IMR-90 (cell line): ENCODE measurements at regions of chr10 and their contacts with region 1.

Region 1: GRCh38 chr10:77911535-77912123 is 14.9 kb downstream of the DLG5 start:
- DNase-seq: peak; percentile 47
- ATAC-seq: peak; percentile 43; the same call in 1 of the 2 replicates
- H3K4me3 ChIP-seq: no peak overlapping the region
- H3K27ac ChIP-seq: no peak overlapping the region
- H3K4me1 ChIP-seq: peaks cover 27% of the 10 kb centered on the region
- H3K27me3 ChIP-seq: no peaks in the 10 kb centered on the region
- CTCF ChIP-seq: no peak; the same call in 1 of the 2 replicates
- POLR2A ChIP-seq: no peak
- RAD21 ChIP-seq: no peak

Region 2: DNA sequence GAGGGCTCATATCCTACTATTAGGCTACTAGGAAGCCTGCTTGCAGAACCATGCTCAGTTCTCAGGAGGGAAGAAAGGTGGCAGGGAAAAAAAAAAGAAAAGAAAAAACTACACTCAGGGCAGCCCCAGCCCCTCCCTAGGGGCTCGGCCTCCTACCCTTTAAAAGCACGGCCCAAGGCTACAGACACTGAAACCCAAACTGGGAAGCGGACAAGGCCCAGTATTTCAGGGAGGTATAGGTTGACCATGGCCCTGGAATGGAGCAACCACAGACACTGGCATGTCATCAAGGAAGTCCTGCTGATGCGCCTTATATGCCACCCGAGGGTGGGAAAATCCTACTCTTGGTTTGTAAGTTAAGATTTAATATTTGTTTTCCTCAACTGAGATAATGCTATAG is 35.9 kb before region 1 on chr10:
- CTCF ChIA-PET with region 1: no interaction called
- POLR2A ChIA-PET with region 1: interaction called, 10 read pairs
- dilution Hi-C with region 1: no loop called
- in situ Hi-C with region 1: no loop called
- intact Hi-C with region 1: no loop called
- DNase-seq: no peak
- ATAC-seq: no peak
- H3K4me3 ChIP-seq: no peak overlapping the region
- H3K27ac ChIP-seq: no peak overlapping the region
- H3K4me1 ChIP-seq: peaks cover 25% of the 10 kb centered on the region
- H3K27me3 ChIP-seq: no peaks in the 10 kb centered on the region
- CTCF ChIP-seq: no peak
- POLR2A ChIP-seq: no peak
- RAD21 ChIP-seq: no peak

Region 3: GRCh38 chr10:78756604-78757349 is 845.1 kb after region 1 on chr10:
- CTCF ChIA-PET with region 1: no interaction called
- POLR2A ChIA-PET with region 1: no interaction called
- dilution Hi-C with region 1: no loop called
- in situ Hi-C with region 1: no loop called
- intact Hi-C with region 1: no loop called
- DNase-seq: peak; percentile 98
- ATAC-seq: peak; percentile 91
- H3K4me3 ChIP-seq: no peak overlapping the region
- H3K27ac ChIP-seq: peak overlapping the region; percentile 59
- H3K4me1 ChIP-seq: peaks cover 26% of the 10 kb centered on the region
- H3K27me3 ChIP-seq: no peaks in the 10 kb centered on the region
- CTCF ChIP-seq: no peak
- POLR2A ChIP-seq: no peak; the same call in 1 of the 2 replicates
- RAD21 ChIP-seq: peak; percentile 45